ENCODE measurements at regions of chr7 and their contacts with region 1.

Region 1: DNA sequence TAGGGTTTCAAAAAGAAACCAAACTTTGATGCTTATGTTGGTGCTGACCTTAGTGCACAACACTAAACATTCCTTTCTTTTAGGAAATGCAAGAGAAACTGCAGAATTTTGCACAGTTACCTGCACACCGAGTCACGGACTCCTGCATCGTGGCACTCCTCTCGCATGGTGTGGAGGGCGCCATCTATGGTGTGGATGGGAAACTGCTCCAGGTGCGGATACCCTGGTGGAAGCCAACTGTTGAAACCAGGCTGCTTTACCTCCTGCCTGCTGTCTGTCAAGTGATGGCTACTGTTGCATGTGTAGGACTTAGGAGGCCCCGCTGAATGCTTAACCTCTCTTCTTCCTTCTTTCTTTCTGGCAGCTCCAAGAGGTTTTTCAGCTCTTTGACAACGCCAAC is 11.7 kb downstream of the CASP2 start:
- DNase-seq: peak; percentile 34 to 61 (median 49)
- H3K4me3 ChIP-seq: no peak overlapping the region
- H3K27ac ChIP-seq: peak overlapping the region; percentile 95 to 98
- H3K4me1 ChIP-seq: peaks cover 45 to 71% (median 60%) of the 10 kb centered on the region in 4 experiments
- H3K27me3 ChIP-seq: no peaks in the 10 kb centered on the region

Region 2: DNA sequence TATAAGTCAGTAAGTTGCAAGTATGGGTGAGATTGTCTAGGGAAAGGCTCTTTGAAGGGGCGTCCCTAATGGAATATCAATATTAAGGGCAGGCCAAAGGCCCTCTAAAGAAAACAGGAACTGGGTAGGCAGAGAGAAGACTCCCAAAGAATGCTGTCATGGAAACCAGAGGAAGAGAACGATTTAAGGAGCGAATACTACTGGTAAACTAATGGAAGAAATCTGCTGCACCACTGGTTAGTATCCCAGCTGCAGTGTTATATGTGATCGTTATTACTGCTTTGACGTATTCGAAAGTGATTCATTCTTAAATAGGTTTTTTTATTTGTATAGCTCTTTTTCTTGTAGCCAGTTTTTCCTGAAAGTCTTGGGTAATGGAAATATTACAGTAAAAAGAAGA is 10.4 kb before region 1 on chr7:
- CTCF ChIA-PET with region 1: interaction called, 32 read pairs
- POLR2A ChIA-PET with region 1: interaction called, 4 read pairs
- DNase-seq: no peak
- H3K4me3 ChIP-seq: peak overlapping the region in 6 of 7 experiments; percentile 81 to 92 (median 86)
- H3K27ac ChIP-seq: peak overlapping the region; percentile 46 to 87
- H3K4me1 ChIP-seq: peaks cover 12 to 40% (median 28%) of the 10 kb centered on the region in 4 experiments
- H3K27me3 ChIP-seq: no peaks in the 10 kb centered on the region